Activated CD4-positive, alpha-beta memory T cell treated with anti-CD3 and anti-CD28 coated beads for 36 hours (primary cell): ENCODE measurements at regions of chr2 and their contacts with region 1.

Region 1: DNA sequence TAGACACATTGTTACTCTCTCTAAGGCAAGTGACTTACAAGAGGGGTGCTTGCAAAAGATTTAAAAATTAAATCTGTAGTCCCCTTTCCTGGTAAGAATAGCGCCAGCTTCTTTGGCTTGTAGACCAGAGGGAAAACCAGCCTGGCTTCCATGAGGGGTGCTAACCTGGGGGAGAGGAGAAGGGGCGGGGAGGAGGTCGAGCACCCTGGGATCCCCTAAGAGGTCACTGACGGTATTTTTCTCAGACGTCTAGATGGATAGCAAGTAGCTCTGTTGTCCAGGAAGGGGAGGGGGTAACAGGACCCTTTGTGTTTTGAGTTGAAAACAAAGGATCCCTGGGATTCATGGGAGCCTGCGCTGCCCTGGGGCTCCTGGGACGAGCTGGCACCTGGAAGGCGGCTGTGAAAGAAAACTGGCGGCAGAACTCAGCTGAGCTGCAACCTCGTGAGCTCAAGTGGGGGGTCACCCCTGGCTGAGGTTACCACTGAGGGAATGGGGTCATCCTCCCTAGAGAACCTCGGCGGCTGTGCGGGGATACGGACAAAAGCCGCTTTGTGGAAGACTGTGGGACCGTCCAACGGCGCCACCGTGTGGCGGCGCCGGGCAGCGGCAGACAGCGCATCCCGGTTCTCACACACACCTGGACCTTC is 37.8 kb upstream of the MRPL19 start:
- DNase-seq: peak; percentile 64
- H3K4me3 Mint-ChIP-seq: no peak overlapping the region
- H3K27ac Mint-ChIP-seq: no peak overlapping the region
- H3K4me1 Mint-ChIP-seq: no peaks in the 10 kb centered on the region
- H3K27me3 Mint-ChIP-seq: peaks cover 54% of the 10 kb centered on the region

Region 2: DNA sequence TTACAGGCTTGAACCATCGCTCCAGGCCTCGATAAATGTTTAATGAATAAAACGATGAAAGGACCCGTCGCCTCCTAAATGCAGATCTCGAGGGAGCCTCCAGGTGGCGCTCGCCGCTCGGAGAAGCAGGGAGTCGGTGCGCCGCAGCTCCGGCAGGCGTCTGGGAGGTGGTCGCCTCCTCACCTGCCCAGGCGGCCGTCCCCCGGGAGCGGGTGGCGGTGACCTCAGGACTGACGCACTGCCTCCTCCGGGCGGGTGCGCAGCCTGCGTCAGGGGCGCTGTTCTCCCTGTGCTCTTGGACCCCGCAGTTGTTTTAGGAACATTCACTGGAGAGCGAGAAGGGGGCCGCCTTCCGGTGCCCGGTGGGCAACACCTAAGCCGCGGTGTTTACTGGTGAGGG is 689.0 kb before region 1 on chr2:
- CTCF ChIA-PET with region 1: interaction called, 17 read pairs
- POLR2A ChIA-PET with region 1: no interaction called
- intact Hi-C with region 1: loop called (anchors 5 kb)
- DNase-seq: peak; percentile 76
- H3K4me3 Mint-ChIP-seq: no peak overlapping the region
- H3K27ac Mint-ChIP-seq: no peak overlapping the region
- H3K4me1 Mint-ChIP-seq: no peaks in the 10 kb centered on the region
- H3K27me3 Mint-ChIP-seq: peaks cover 14% of the 10 kb centered on the region

Region 3: GRCh38 chr2:75064691-75065396 is 544.0 kb before region 1 on chr2:
- CTCF ChIA-PET with region 1: interaction called, 4 read pairs
- POLR2A ChIA-PET with region 1: no interaction called
- intact Hi-C with region 1: loop called (anchors 10 kb)
- DNase-seq: peak; percentile 66
- H3K4me3 Mint-ChIP-seq: no peak overlapping the region
- H3K27ac Mint-ChIP-seq: no peak overlapping the region
- H3K4me1 Mint-ChIP-seq: no peaks in the 10 kb centered on the region
- H3K27me3 Mint-ChIP-seq: no peaks in the 10 kb centered on the region

Region 4: GRCh38 chr2:75466708-75467311 is 142.0 kb before region 1 on chr2:
- CTCF ChIA-PET with region 1: interaction called, 34 read pairs
- POLR2A ChIA-PET with region 1: no interaction called
- intact Hi-C with region 1: loop called (anchors 1 kb)
- DNase-seq: peak; percentile 13
- H3K4me3 Mint-ChIP-seq: no peak overlapping the region
- H3K27ac Mint-ChIP-seq: no peak overlapping the region
- H3K4me1 Mint-ChIP-seq: no peaks in the 10 kb centered on the region
- H3K27me3 Mint-ChIP-seq: peaks cover 13% of the 10 kb centered on the region

Region 5: GRCh38 chr2:75560768-75561565 is 47.8 kb before region 1 on chr2 and contains the start of gene EVA1A:
- CTCF ChIA-PET with region 1: interaction called, 3 read pairs
- POLR2A ChIA-PET with region 1: no interaction called
- intact Hi-C with region 1: loop called (anchors 5 kb)
- DNase-seq: peak; percentile 29
- H3K4me3 Mint-ChIP-seq: peak within 1 kb of the TSS; percentile 62
- H3K27ac Mint-ChIP-seq: no peak within 1 kb of the TSS
- H3K4me1 Mint-ChIP-seq: peaks cover 10% of the 10 kb centered on the region
- H3K27me3 Mint-ChIP-seq: peaks cover 47% of the 10 kb centered on the region
- total RNA-seq, gene EVA1A: not detected

Region 6: DNA sequence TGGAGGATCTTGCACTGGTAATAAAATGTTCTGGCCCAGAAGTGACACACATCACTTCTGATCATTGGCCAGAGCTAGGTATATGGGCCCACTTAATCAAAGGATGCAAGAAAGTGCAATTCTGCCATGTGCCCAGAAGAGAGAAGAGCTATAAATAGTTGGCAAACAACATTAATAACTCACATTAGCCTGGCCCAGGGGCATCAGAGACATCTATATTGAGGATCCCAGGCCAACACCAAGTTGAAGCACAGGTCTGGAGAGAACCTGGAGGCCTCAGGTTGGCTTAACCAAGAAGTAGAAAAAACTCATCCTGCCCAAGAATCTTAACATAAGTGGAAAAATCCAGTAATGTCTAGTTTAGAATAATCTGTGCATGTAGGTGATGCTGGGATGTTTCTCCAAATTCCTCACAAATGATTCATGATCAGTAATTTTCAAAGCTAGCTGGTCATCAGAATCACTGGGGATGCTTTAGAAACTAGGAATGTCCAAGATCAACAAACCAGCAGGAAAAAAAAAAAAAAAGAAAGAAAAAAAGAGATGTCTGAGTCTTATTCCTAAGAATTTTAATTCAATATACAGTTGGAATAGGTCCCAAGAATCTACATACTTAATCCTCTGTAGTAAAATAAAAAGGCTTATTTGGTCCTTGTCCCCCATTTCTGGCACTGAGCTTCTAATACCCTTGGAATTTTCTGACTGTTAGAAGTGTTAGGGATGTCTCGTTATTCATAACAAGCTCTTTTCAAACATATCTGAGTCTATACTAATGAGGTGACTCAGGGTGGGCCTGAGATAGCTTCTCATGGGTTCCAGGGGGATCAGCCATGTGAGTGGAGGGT is 13.0 kb before region 1 on chr2:
- CTCF ChIA-PET with region 1: interaction called, 16 read pairs
- POLR2A ChIA-PET with region 1: no interaction called
- intact Hi-C with region 1: no loop called
- DNase-seq: no peak
- H3K4me3 Mint-ChIP-seq: no peak overlapping the region
- H3K27ac Mint-ChIP-seq: no peak overlapping the region
- H3K4me1 Mint-ChIP-seq: no peaks in the 10 kb centered on the region
- H3K27me3 Mint-ChIP-seq: peaks cover 1% of the 10 kb centered on the region

Region 7: GRCh38 chr2:75627895-75628504 is 19.2 kb after region 1 on chr2:
- CTCF ChIA-PET with region 1: interaction called, 12 read pairs
- POLR2A ChIA-PET with region 1: no interaction called
- intact Hi-C with region 1: no loop called
- DNase-seq: peak; percentile 72
- H3K4me3 Mint-ChIP-seq: no peak overlapping the region
- H3K27ac Mint-ChIP-seq: no peak overlapping the region
- H3K4me1 Mint-ChIP-seq: no peaks in the 10 kb centered on the region
- H3K27me3 Mint-ChIP-seq: peaks cover 23% of the 10 kb centered on the region

Region 8: GRCh38 chr2:75667884-75668283 is 59.1 kb after region 1 on chr2:
- CTCF ChIA-PET with region 1: no interaction called
- POLR2A ChIA-PET with region 1: no interaction called
- intact Hi-C with region 1: no loop called
- DNase-seq: no peak
- H3K4me3 Mint-ChIP-seq: no peak overlapping the region
- H3K27ac Mint-ChIP-seq: no peak overlapping the region
- H3K4me1 Mint-ChIP-seq: no peaks in the 10 kb centered on the region
- H3K27me3 Mint-ChIP-seq: no peaks in the 10 kb centered on the region